H1 (cell line): ENCODE measurements at regions of chr17 and their contacts with region 1.

Region 1: DNA sequence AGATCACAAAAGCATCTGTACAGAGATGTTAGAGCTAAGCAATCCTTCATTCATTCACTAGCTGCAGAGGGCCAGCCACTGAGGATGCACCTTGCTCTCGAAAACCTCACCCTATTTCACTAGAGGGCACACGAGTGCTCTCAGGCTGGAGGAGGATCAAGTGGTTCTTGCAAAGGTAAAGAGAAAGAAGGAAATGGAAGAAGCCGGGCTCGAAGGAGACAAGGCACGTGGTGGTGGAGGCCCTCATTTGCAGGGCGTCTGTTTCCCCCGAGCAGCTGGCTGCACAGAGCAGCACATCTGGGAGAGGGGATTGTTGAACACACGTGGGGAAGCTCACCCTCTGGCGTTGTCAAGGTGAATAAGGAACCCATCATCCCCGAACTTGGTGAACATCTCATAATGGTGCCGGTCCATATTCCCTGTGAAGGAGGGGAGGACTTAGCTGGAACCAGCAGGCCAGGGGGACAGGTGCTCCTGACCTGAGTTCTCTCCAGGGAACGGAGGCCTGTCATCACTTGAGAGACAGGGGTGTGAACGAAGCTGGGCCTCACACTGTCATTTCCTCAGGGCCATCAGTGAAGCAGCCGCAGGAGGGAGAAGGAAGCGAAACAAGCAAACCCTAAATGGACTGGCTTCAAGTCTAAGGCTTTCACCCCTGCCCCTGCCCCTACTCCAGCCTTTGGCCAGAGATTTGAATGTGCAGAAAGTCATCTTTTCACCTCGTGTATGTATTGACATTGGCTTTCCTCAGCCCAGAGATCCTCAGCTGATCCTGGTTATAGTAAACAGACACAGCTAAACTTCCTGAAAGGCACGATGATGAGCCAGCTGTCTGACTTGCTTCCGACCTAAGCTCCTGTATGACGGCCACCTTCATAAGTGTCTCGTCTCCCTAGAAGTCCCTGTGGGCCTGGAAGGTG is 27.6 kb downstream of the PRKAR1A start:
- DNase-seq: no peak
- H3K4me3 ChIP-seq: no peak overlapping the region
- H3K27ac ChIP-seq: no peak overlapping the region
- H3K4me1 ChIP-seq: no peaks in the 10 kb centered on the region
- H3K27me3 ChIP-seq: no peaks in the 10 kb centered on the region
- CTCF ChIP-seq: peak; percentile 17 to 34 (median 34); a peak in 3 of 4 replicates
- EP300 ChIP-seq: no peak
- POLR2A ChIP-seq: no peak
- RAD21 ChIP-seq: peak; percentile 54 to 59

Region 2: GRCh38 chr17:68468334-68468733 is 71.5 kb before region 1 on chr17:
- CTCF ChIA-PET with region 1: no interaction called
- POLR2A ChIA-PET with region 1: no interaction called
- DNase-seq: no peak
- H3K4me3 ChIP-seq: no peak overlapping the region
- H3K27ac ChIP-seq: no peak overlapping the region
- H3K4me1 ChIP-seq: peaks cover 0 to 3% (median 0%) of the 10 kb centered on the region in 4 experiments; a peak in 3 of 7 replicates
- H3K27me3 ChIP-seq: no peaks in the 10 kb centered on the region
- CTCF ChIP-seq: no peak
- EP300 ChIP-seq: no peak
- POLR2A ChIP-seq: no peak
- RAD21 ChIP-seq: no peak

Region 3: DNA sequence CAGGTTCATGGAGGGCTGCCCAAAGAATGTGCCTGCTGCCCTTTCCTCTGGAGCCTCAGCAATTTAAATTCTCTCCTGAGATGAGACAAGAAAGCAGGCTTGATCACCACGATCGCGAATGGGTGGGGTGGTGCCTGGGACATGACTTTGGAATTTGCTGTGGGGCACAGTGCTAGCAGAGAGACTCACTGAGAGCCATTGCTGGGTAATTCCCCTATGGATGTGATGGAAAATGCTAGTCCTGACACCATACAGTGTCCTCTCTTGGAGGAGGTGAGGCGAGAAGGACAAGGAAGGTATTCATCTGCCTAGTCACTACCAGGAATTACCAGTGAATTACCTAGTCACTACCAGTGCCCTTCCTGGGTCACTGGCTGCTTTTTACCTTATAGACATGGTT is 45.8 kb after region 1 on chr17:
- CTCF ChIA-PET with region 1: no interaction called
- POLR2A ChIA-PET with region 1: no interaction called
- DNase-seq: no peak
- H3K4me3 ChIP-seq: no peak overlapping the region
- H3K27ac ChIP-seq: no peak overlapping the region
- H3K4me1 ChIP-seq: peaks cover 0 to 2% (median 0%) of the 10 kb centered on the region in 4 experiments; a peak in 1 of 7 replicates
- H3K27me3 ChIP-seq: no peaks in the 10 kb centered on the region
- CTCF ChIP-seq: no peak
- EP300 ChIP-seq: no peak
- POLR2A ChIP-seq: no peak
- RAD21 ChIP-seq: no peak

Region 4: GRCh38 chr17:68600067-68600930 is 60.5 kb after region 1 on chr17:
- CTCF ChIA-PET with region 1: interaction called, 12 read pairs
- POLR2A ChIA-PET with region 1: no interaction called
- DNase-seq: peak in 1 of 2 experiments; percentile 80
- H3K4me3 ChIP-seq: peak overlapping the region; percentile 56 to 91 (median 78)
- H3K27ac ChIP-seq: no peak overlapping the region; the same call in 1 of the 2 replicates
- H3K4me1 ChIP-seq: peaks cover 0 to 15% (median 7%) of the 10 kb centered on the region in 4 experiments; a peak in 5 of 7 replicates
- H3K27me3 ChIP-seq: peaks cover 0 to 25% (median 16%) of the 10 kb centered on the region in 4 experiments; a peak in 6 of 7 replicates
- CTCF ChIP-seq: peak; percentile 50 to 63 (median 58)
- EP300 ChIP-seq: no peak
- POLR2A ChIP-seq: peak in 1 of 2 experiments; percentile 20; a peak in 1 of 3 replicates
- RAD21 ChIP-seq: peak; percentile 58 to 73